ENCODE measurements at regions of chr4 and their contacts with region 1.

Region 1: GRCh38 chr4:66777097-66777496 is 768.2 kb downstream of the CENPC start:
- DNase-seq: no peak
- H3K4me3 ChIP-seq: no peak overlapping the region
- H3K4me3 Mint-ChIP-seq: no peak overlapping the region
- H3K27ac Mint-ChIP-seq: no peak overlapping the region
- H3K4me1 ChIP-seq: no peaks in the 10 kb centered on the region
- H3K4me1 Mint-ChIP-seq: no peaks in the 10 kb centered on the region
- H3K27me3 ChIP-seq: no peaks in the 10 kb centered on the region
- H3K27me3 Mint-ChIP-seq: no peaks in the 10 kb centered on the region
- CTCF ChIP-seq: no peak

Region 2: GRCh38 chr4:67103001-67103747 is 326.1 kb after region 1 on chr4:
- CTCF ChIA-PET with region 1: no interaction called
- POLR2A ChIA-PET with region 1: no interaction called
- intact Hi-C with region 1: loop called (anchors 2 kb)
- DNase-seq: no peak
- H3K4me3 ChIP-seq: no peak overlapping the region
- H3K4me3 Mint-ChIP-seq: no peak overlapping the region
- H3K27ac Mint-ChIP-seq: no peak overlapping the region
- H3K4me1 ChIP-seq: no peaks in the 10 kb centered on the region
- H3K4me1 Mint-ChIP-seq: no peaks in the 10 kb centered on the region
- H3K27me3 ChIP-seq: no peaks in the 10 kb centered on the region
- H3K27me3 Mint-ChIP-seq: peaks cover 5% of the 10 kb centered on the region
- CTCF ChIP-seq: peak in 1 of 2 experiments; percentile 20